Testis (tissue), 5 donors: ENCODE measurements at regions of chr4 and their contacts with region 1.

Region 1: DNA sequence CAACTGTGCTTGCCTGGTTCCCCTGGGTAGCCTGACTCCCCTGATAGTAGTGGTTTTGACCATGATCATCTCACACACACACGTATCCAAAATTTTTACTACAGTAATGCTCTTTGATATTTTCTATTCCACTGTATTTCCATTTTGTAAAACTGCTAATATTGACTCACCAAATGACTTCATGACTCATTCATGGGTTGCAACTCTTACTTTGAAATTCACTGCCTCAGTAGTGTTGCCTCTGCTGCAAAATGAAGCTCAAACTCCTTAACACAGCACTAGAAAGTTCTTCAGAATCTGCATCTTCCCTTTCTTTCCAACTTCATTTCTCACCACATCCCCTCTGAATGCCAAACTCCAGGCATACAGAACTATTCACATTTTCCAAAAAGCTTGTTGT is 20.3 kb downstream of the QRFPR start:
- DNase-seq: no peak
- H3K4me3 ChIP-seq: no peak overlapping the region
- H3K27ac ChIP-seq: no peak overlapping the region
- H3K4me1 ChIP-seq: no peaks in the 10 kb centered on the region
- H3K27me3 ChIP-seq: no peaks in the 10 kb centered on the region
- CTCF ChIP-seq: no peak
- POLR2A ChIP-seq: no peak

Region 2: GRCh38 chr4:121736735-121737351 is 376.3 kb after region 1 on chr4:
- intact Hi-C with region 1: loop called (anchors 10 kb)
- DNase-seq: peak; percentile 49
- H3K4me3 ChIP-seq: no peak overlapping the region
- H3K27ac ChIP-seq: no peak overlapping the region
- H3K4me1 ChIP-seq: no peaks in the 10 kb centered on the region
- H3K27me3 ChIP-seq: no peaks in the 10 kb centered on the region
- CTCF ChIP-seq: peak in 2 of 3 experiments; percentile 34 to 51
- POLR2A ChIP-seq: no peak